HepG2 (cell line): ENCODE measurements at regions of chr22 and their contacts with region 1.

Region 1: GRCh38 chr22:22397277-22397870 is 111.2 kb downstream of the ZNF280B start:
- DNase-seq: peak; percentile 73
- ATAC-seq: peak; percentile 97
- H3K4me3 ChIP-seq: no peak overlapping the region
- H3K27ac ChIP-seq: no peak overlapping the region
- H3K4me1 ChIP-seq: peaks cover 35% of the 10 kb centered on the region
- H3K27me3 ChIP-seq: peaks cover 0 to 14% of the 10 kb centered on the region in 2 experiments; a peak in 3 of 5 replicates
- CTCF ChIP-seq: peak; percentile 84
- EP300 ChIP-seq: no peak; a peak in 1 of 4 replicates
- POLR2A ChIP-seq: no peak
- RAD21 ChIP-seq: peak; percentile 62

Region 2: GRCh38 chr22:22380098-22381030 is 17.0 kb before region 1 on chr22:
- CTCF ChIA-PET with region 1: interaction called, 3 read pairs
- POLR2A ChIA-PET with region 1: no interaction called
- in situ Hi-C with region 1: no loop called
- intact Hi-C with region 1: loop called (anchors 1 kb)
- DNase-seq: no peak
- ATAC-seq: peak; percentile 73
- H3K4me3 ChIP-seq: no peak overlapping the region
- H3K27ac ChIP-seq: no peak overlapping the region
- H3K4me1 ChIP-seq: no peaks in the 10 kb centered on the region
- H3K27me3 ChIP-seq: peaks cover 0 to 11% of the 10 kb centered on the region in 2 experiments; a peak in 3 of 5 replicates
- CTCF ChIP-seq: peak; percentile 72
- EP300 ChIP-seq: no peak
- POLR2A ChIP-seq: no peak
- RAD21 ChIP-seq: 0 out of 2 replicates have a peak, but pooled peaks have one; percentile 26

Region 3: GRCh38 chr22:22558972-22559603 is 161.7 kb after region 1 on chr22 and contains the start of gene PRAME:
- CTCF ChIA-PET with region 1: no interaction called
- POLR2A ChIA-PET with region 1: no interaction called
- in situ Hi-C with region 1: no loop called
- intact Hi-C with region 1: no loop called
- DNase-seq: peak; percentile 79
- ATAC-seq: peak; percentile 98
- H3K4me3 ChIP-seq: peak within 1 kb of the TSS in 2 of 3 experiments; percentile 8 to 57; a peak in 1 of 6 replicates
- H3K27ac ChIP-seq: no peak within 1 kb of the TSS
- H3K4me1 ChIP-seq: no peaks in the 10 kb centered on the region; the same call in 1 of the 2 replicates
- H3K27me3 ChIP-seq: peaks cover 0 to 1% of the 10 kb centered on the region in 2 experiments; a peak in 2 of 5 replicates
- CTCF ChIP-seq: peak; percentile 82
- EP300 ChIP-seq: no peak
- POLR2A ChIP-seq: no peak
- RAD21 ChIP-seq: peak; percentile 65; the same call in 1 of the 2 replicates
- total RNA-seq, gene PRAME: 0.11 and 0.45 TPM in 2 replicates